ENCODE measurements at regions of chr12 and their contacts with region 1.

Region 1: GRCh38 chr12:118404876-118405521 is 28.6 kb downstream of the SUDS3 start:
- DNase-seq: peak; percentile 22 to 56
- H3K4me3 ChIP-seq: no peak overlapping the region
- H3K27ac ChIP-seq: no peak overlapping the region
- H3K4me1 ChIP-seq: no peaks in the 10 kb centered on the region
- H3K27me3 ChIP-seq: no peaks in the 10 kb centered on the region
- CTCF ChIP-seq: peak; percentile 89

Region 2: DNA sequence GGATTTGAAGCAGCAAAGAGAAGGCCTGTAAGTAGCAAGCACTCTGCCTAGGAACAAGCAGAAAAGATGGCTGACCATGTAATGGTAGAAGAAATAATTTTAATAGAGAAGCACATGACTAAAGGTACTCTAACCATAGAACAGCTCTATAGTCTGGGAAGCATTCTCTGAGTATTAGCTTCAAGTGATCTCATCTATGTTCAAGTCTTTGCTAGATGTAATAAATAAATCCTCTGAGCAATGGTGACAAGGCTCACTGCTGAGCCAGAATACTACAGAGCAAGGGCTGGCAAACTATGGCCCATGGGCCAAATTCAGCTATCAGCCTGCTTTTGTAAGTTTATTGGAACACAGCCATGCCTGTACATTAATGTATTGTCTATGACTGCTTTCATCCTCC is 184.3 kb before region 1 on chr12:
- CTCF ChIA-PET with region 1: no interaction called
- POLR2A ChIA-PET with region 1: no interaction called
- intact Hi-C with region 1: no loop called
- DNase-seq: no peak
- H3K4me3 ChIP-seq: no peak overlapping the region
- H3K27ac ChIP-seq: no peak overlapping the region
- H3K4me1 ChIP-seq: no peaks in the 10 kb centered on the region
- H3K27me3 ChIP-seq: no peaks in the 10 kb centered on the region
- CTCF ChIP-seq: no peak

Region 3: DNA sequence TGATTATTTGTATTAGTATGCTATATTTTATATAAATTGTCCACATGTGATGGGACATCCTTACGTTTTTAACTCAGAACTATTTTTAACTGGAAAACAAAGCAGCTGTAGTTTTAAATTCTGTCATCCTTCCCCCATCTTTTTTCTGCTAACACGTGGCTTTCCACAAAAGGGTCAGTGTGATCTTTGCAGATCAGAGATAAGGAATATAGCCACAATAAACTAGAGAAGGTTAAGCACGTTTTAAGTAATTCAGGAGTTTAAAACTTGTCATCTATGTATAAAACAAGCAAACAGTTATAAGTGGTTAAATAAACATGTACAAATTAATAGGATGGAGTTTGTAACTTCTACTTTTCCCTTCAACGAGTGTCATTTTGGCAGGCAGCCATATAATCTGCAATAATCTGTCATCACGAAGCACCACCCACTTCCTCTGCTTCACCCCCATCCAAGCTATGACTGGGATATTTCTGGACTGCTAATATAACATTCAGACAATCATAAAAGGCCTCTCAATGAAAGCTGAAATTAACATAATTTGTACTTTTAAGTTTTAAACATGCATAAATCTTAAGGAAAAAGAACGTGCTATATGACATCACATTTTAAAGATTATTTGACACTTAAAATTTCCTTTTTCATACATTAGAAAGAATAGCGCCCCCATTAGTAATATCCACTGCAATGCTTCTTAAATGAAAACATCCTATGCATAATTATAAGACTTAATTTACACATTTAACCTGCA is 47.6 kb before region 1 on chr12:
- CTCF ChIA-PET with region 1: no interaction called
- POLR2A ChIA-PET with region 1: no interaction called
- intact Hi-C with region 1: no loop called
- DNase-seq: no peak
- H3K4me3 ChIP-seq: no peak overlapping the region
- H3K27ac ChIP-seq: peak overlapping the region; percentile 81
- H3K4me1 ChIP-seq: peaks cover 51% of the 10 kb centered on the region
- H3K27me3 ChIP-seq: no peaks in the 10 kb centered on the region
- CTCF ChIP-seq: no peak

Region 4: DNA sequence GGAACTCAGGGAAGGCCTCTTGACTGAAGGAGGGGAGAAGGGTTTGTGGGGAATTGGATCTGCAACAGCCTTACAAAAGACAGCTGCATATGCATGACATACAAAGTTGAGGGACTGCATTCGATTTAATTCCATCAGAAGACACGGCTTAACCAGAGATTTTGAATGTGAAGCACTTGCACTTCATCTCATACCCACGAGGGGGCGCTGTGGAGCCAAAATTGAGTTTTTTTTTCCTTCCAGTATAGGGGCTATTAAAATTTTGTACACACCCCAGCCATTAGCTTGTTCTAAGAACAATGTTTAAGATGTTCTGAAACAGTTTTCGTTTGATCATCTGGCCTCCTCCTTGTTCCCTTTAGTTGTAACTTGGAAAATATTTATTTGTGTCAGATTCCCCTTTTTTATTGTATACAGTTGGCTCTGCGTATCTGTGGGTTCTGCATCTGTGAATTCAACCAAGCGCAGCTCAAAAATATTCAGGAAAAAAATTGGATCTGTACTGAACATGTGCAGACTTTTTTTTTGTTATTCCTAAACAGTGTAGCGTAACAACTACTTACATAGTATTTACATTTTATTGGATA is 27.0 kb before region 1 on chr12:
- CTCF ChIA-PET with region 1: no interaction called
- POLR2A ChIA-PET with region 1: no interaction called
- intact Hi-C with region 1: no loop called
- DNase-seq: peak in 1 of 2 experiments; percentile 69
- H3K4me3 ChIP-seq: peak overlapping the region; percentile 97
- H3K27ac ChIP-seq: peak overlapping the region; percentile 93; the same call in 1 of the 2 replicates
- H3K4me1 ChIP-seq: peaks cover 22% of the 10 kb centered on the region
- H3K27me3 ChIP-seq: no peaks in the 10 kb centered on the region
- CTCF ChIP-seq: peak; percentile 99

Region 5: GRCh38 chr12:118526255-118527095 is 121.5 kb after region 1 on chr12:
- CTCF ChIA-PET with region 1: no interaction called
- POLR2A ChIA-PET with region 1: no interaction called
- intact Hi-C with region 1: no loop called
- DNase-seq: no peak
- H3K4me3 ChIP-seq: no peak overlapping the region
- H3K27ac ChIP-seq: no peak overlapping the region
- H3K4me1 ChIP-seq: no peaks in the 10 kb centered on the region
- H3K27me3 ChIP-seq: peaks cover 62% of the 10 kb centered on the region
- CTCF ChIP-seq: no peak

Region 6: DNA sequence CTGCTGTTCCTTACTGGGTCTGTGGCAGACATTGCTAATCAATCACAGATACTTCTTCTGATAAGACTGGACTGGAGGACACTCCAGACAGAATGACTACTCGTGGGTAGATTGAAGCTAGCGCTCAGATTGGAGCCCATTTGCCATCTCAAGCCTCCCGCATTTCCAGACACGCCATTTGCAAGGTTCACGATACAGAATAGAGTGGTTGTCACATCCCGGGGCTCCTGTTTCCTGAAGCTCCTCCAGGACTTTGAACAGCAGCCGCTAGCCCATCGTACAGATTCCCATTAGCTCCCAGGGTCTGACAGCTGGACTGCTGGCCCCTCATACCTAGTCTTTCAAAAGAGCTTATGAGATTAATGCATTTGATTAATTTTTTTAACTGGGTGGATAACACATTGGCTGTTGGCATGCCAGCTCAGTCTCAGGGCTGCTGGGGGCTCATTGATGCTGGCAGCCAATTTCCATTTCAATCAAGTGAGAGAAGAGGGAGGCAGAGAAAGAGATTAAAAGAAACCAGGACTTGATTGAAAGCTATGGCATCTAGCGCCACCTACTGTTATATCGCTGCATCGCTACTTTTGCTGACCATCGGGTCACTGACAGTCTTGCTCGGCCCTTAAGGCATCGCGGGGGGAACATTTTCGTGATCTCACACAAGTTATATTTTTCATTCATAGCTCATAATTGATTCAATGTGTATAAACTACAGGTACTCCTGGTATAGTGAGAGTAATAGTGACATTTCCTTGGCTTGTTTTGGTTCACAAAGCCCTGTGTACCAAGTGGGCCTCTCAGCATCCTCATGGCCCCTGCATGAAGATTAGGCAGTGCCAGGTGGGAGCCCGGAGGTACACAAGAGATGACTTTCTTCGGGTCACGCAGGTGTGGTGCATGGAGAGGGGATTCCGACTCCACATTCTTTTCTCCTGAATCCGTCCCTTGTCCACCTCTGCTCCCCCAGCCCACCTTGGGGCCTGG is 1008.1 kb after region 1 on chr12:
- CTCF ChIA-PET with region 1: no interaction called
- POLR2A ChIA-PET with region 1: no interaction called
- intact Hi-C with region 1: loop called (anchors 1 kb)
- DNase-seq: peak; percentile 37 to 44
- H3K4me3 ChIP-seq: no peak overlapping the region
- H3K27ac ChIP-seq: no peak overlapping the region
- H3K4me1 ChIP-seq: no peaks in the 10 kb centered on the region
- H3K27me3 ChIP-seq: peaks cover 3% of the 10 kb centered on the region; the same call in 1 of the 2 replicates
- CTCF ChIP-seq: peak; percentile 83

Measured in PC-9 (cell line).